Transverse colon (tissue), 4 donors: ENCODE measurements at regions of chr1 and their contacts with region 1.

Region 1: DNA sequence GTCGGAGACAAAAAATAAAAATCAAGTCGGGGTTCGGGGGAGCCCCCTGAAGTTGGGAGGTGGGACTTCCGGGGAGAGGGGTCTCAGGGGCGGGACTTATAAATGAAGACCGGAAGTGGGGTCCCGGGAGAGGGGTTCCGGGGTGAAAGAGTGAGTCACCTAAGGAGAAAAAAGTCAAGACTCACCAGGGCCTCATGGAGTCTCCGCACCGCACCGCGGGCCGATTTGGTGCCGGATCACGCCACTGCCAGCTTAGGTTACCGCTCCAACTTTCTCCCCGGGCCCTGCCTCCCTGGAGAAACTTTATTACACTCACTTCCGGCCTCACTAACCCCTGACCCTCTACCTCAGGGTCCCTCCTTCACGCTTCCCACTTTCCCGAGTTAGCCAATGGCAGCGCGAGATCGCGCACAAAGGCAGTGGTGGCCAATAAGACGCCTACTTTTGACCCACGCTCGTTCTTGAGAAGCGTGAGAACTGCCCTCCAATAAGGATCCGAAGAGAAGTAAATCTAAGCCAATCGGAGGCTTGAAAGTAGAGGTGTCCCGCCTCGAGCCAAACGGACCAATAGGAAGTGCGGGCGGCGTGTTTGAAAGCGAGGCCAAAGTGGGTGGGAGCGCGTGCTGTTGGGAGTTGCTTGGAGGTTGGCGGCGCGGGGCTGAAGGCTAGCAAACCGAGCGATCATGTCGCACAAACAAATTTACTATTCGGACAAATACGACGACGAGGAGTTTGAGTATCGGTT is at the start of gene CKS1B:
- DNase-seq: peak; percentile 97
- H3K4me3 ChIP-seq: peak within 1 kb of the TSS; percentile 61 to 72 (median 68)
- H3K27ac ChIP-seq: peak within 1 kb of the TSS; percentile 97 to 99 (median 99)
- H3K4me1 ChIP-seq: peaks cover 35 to 58% (median 49%) of the 10 kb centered on the region in 4 donors
- H3K27me3 ChIP-seq: no peaks in the 10 kb centered on the region
- CTCF ChIP-seq: no peak
- EP300 ChIP-seq: no peak
- POLR2A ChIP-seq: peak; percentile 66
- total RNA-seq, gene CKS1B: 28.9 to 41.4 (median 35.2) TPM in 3 of 4 donors, not detected in the other

Region 2: DNA sequence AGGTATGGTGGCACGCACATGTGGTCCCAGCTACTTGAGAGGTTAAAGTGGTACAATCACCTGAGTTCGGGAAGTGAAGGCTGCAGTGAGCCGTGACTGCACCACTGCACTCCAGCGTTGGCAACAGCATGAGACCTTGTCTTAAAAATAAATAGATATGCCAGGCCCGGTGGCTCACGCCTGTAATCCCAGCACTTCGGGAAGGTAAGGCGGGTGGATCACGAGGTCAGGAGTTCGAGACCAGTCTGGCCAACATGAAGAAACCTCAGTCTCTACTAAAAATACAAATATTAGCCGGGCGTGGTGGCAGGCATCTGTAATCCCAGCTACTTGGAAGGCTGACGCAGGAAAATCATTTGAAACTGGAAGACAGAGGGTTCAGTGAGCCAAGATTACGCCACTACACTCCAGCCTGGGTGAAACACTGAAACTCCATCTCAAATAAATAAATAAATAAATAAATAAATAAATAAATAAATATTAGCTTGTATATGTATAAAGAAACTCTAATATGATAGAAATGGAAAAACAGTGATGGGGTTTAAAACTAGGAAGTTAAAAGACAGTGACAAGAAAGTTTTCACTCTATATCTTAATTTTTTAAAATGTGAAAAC is 1070.3 kb before region 1 on chr1:
- in situ Hi-C with region 1: no loop called
- intact Hi-C with region 1: no loop called
- DNase-seq: no peak
- H3K4me3 ChIP-seq: no peak overlapping the region
- H3K27ac ChIP-seq: peak overlapping the region in 1 of 4 donors; percentile 10
- H3K4me1 ChIP-seq: peaks cover 0 to 10% (median 0%) of the 10 kb centered on the region in 4 donors
- H3K27me3 ChIP-seq: no peaks in the 10 kb centered on the region
- CTCF ChIP-seq: no peak
- EP300 ChIP-seq: no peak
- POLR2A ChIP-seq: no peak

Region 3: GRCh38 chr1:154607609-154608396 is 366.4 kb before region 1 on chr1 and contains the start of gene ADAR:
- in situ Hi-C with region 1: no loop called
- intact Hi-C with region 1: no loop called
- DNase-seq: peak; percentile 92
- H3K4me3 ChIP-seq: peak within 1 kb of the TSS; percentile 66 to 94 (median 86)
- H3K27ac ChIP-seq: peak within 1 kb of the TSS; percentile 91 to 99 (median 98)
- H3K4me1 ChIP-seq: peaks cover 22 to 45% (median 28%) of the 10 kb centered on the region in 4 donors
- H3K27me3 ChIP-seq: no peaks in the 10 kb centered on the region
- CTCF ChIP-seq: no peak
- EP300 ChIP-seq: no peak
- POLR2A ChIP-seq: no peak
- total RNA-seq, gene ADAR: 81.5 to 140 (median 110) TPM

Region 4: DNA sequence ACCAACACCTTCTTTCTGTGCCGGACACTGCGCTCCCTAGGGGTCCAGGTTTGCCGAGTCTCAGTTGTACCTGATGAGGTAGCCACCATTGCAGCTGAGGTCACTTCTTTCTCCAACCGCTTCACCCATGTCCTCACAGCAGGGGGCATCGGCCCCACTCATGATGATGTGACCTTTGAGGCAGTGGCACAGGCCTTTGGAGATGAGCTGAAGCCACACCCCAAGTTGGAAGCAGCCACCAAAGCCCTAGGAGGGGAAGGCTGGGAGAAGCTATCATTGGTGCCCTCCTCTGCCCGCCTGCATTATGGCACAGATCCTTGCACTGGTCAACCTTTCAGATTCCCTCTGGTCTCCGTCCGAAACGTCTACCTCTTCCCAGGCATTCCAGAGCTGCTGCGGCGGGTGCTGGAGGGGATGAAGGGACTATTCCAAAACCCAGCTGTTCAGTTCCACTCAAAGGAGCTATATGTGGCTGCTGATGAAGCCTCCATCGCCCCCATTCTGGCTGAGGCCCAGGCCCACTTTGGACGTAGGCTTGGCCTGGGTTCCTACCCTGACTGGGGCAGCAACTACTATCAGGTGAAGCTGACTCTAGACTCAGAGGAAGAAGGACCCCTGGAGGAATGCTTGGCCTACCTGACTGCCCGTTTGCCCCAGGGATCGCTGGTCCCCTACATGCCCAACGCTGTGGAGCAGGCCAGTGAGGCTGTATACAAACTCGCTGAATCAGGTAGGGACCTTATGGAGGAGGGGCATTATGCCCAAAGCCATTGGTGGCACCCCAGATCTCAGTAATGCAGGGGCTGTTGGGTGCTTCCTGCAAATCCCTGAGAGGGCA is 14.1 kb after region 1 on chr1:
- in situ Hi-C with region 1: no loop called
- intact Hi-C with region 1: no loop called
- DNase-seq: no peak
- H3K4me3 ChIP-seq: no peak overlapping the region
- H3K27ac ChIP-seq: no peak overlapping the region
- H3K4me1 ChIP-seq: peaks cover 7 to 21% (median 15%) of the 10 kb centered on the region in 4 donors
- H3K27me3 ChIP-seq: no peaks in the 10 kb centered on the region
- CTCF ChIP-seq: no peak
- EP300 ChIP-seq: no peak
- POLR2A ChIP-seq: no peak

Region 5: GRCh38 chr1:155001675-155002463 is 27.6 kb after region 1 on chr1:
- in situ Hi-C with region 1: no loop called
- intact Hi-C with region 1: loop called (anchors 5 kb)
- DNase-seq: peak; percentile 100
- H3K4me3 ChIP-seq: peak overlapping the region; percentile 66 to 90 (median 79)
- H3K27ac ChIP-seq: peak overlapping the region; percentile 96 to 100 (median 98)
- H3K4me1 ChIP-seq: peaks cover 38 to 48% (median 46%) of the 10 kb centered on the region in 4 donors
- H3K27me3 ChIP-seq: no peaks in the 10 kb centered on the region
- CTCF ChIP-seq: peak in 4 of 5 experiments; percentile 23 to 46 (median 42)
- EP300 ChIP-seq: no peak
- POLR2A ChIP-seq: peak; percentile 87

Region 6: GRCh38 chr1:155050560-155051341 is 76.5 kb after region 1 on chr1 and contains the start of gene ADAM15:
- in situ Hi-C with region 1: loop called in 3 of 4 experiments (anchors 25 kb)
- intact Hi-C with region 1: no loop called
- DNase-seq: peak; percentile 92
- H3K4me3 ChIP-seq: peak within 1 kb of the TSS; percentile 53 to 72 (median 63)
- H3K27ac ChIP-seq: peak within 1 kb of the TSS; percentile 91 to 99 (median 94)
- H3K4me1 ChIP-seq: peaks cover 15 to 41% (median 26%) of the 10 kb centered on the region in 4 donors
- H3K27me3 ChIP-seq: no peaks in the 10 kb centered on the region
- CTCF ChIP-seq: peak; percentile 93 to 99 (median 95)
- EP300 ChIP-seq: no peak
- POLR2A ChIP-seq: peak; percentile 76
- total RNA-seq, gene ADAM15: 90.6 to 196 (median 115) TPM

Region 7: GRCh38 chr1:155158979-155159378 is 184.7 kb after region 1 on chr1:
- in situ Hi-C with region 1: no loop called
- intact Hi-C with region 1: no loop called
- DNase-seq: no peak
- H3K4me3 ChIP-seq: no peak overlapping the region
- H3K27ac ChIP-seq: no peak overlapping the region
- H3K4me1 ChIP-seq: no peaks in the 10 kb centered on the region
- H3K27me3 ChIP-seq: no peaks in the 10 kb centered on the region
- CTCF ChIP-seq: no peak
- EP300 ChIP-seq: no peak
- POLR2A ChIP-seq: no peak